ENCODE measurements at regions of chr16 and their contacts with region 1.

Region 1: GRCh38 chr16:3282730-3283524 is at the start of gene ZNF263:
- H3K4me3 Mint-ChIP-seq: peak within 1 kb of the TSS; percentile 93
- H3K27ac Mint-ChIP-seq: peak within 1 kb of the TSS; percentile 98
- H3K4me1 Mint-ChIP-seq: peaks cover 36% of the 10 kb centered on the region
- H3K27me3 Mint-ChIP-seq: peaks cover 9% of the 10 kb centered on the region

Region 2: GRCh38 chr16:3264137-3265036 is 18.5 kb before region 1 on chr16:
- intact Hi-C with region 1: loop called (anchors 1 kb)
- H3K4me3 Mint-ChIP-seq: peak overlapping the region; percentile 82
- H3K27ac Mint-ChIP-seq: peak overlapping the region; percentile 96
- H3K4me1 Mint-ChIP-seq: peaks cover 24% of the 10 kb centered on the region
- H3K27me3 Mint-ChIP-seq: no peaks in the 10 kb centered on the region

Region 3: DNA sequence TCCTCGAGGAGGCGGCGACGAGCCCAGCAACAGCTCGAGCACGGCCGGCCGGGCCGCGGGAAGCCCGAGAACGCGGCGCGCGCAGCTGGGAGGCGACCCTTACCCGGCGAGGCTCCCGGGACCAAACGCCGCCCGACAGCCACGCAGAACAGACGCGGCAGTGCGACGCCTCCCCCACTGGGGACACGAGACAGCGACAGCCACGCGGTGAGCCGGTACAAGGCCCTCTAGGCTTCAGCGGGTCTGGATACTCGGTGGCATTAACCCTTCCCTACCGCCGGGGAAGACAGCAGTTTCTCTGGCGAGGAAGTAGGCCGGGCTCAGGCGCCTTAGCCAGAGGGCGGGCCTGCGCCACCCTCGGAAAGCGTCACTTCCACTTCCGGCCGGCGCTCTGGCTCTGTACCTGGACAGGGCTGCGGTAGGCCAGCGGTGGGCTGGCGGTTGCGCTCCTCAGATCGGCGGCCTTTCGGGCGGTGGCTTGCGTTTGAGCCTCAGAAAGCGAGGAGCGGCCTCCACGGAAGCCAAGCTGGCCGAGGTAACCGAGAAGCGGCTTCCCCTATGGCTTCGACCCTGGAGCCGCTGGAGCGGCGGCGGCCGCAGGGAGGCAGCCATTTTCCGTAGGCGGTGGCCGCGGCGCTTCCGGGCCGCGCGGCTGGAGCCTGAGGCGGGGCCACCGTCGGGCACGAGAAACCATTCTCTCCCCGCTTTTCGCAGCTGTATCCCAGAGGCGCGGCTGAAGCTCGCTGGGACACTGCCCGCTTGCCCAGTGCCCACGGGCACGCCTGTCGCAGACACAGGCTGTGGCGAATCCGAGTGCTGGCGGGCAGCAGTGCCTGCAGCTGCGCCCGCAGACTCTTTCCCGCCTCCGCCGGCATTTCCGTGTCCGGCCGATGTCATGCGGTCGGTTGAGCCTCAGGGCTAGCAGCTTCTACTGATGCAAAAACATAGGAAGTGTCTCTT is 22.5 kb after region 1 on chr16 and contains the starts of genes TIGD7 and ZNF75A:
- intact Hi-C with region 1: loop called (anchors 1 kb)
- H3K4me3 Mint-ChIP-seq: peak within 1 kb of the TSS; percentile 80
- H3K27ac Mint-ChIP-seq: peak within 1 kb of the TSS; percentile 90
- H3K4me1 Mint-ChIP-seq: peaks cover 8% of the 10 kb centered on the region
- H3K27me3 Mint-ChIP-seq: no peaks in the 10 kb centered on the region

Region 4: GRCh38 chr16:3400779-3401688 is 118.1 kb after region 1 on chr16 and contains the starts of genes ZNF174 and ZSCAN32:
- intact Hi-C with region 1: loop called (anchors 2 kb)
- H3K4me3 Mint-ChIP-seq: peak within 1 kb of the TSS; percentile 96
- H3K27ac Mint-ChIP-seq: peak within 1 kb of the TSS; percentile 85
- H3K4me1 Mint-ChIP-seq: peaks cover 27% of the 10 kb centered on the region
- H3K27me3 Mint-ChIP-seq: no peaks in the 10 kb centered on the region